Psoas muscle (tissue), 8 donors: ENCODE measurements at regions of chr3 and their contacts with region 1.

Region 1: GRCh38 chr3:108552267-108553159 is 36.7 kb downstream of the CIP2A start:
- DNase-seq: no peak
- ATAC-seq: peak in 1 of 4 donors; percentile 78
- H3K4me3 ChIP-seq: no peak overlapping the region
- H3K27ac ChIP-seq: no peak overlapping the region
- H3K4me1 ChIP-seq: no peaks in the 10 kb centered on the region
- H3K27me3 ChIP-seq: no peaks in the 10 kb centered on the region
- CTCF ChIP-seq: peak; percentile 62

Region 2: GRCh38 chr3:108489771-108490170 is 62.7 kb before region 1 on chr3:
- intact Hi-C with region 1: loop called (anchors 1 to 2 kb)
- DNase-seq: no peak
- ATAC-seq: peak in 3 of 4 donors; percentile 56 to 69 (median 59)
- H3K4me3 ChIP-seq: no peak overlapping the region
- H3K27ac ChIP-seq: no peak overlapping the region
- H3K4me1 ChIP-seq: peaks cover 7% of the 10 kb centered on the region
- H3K27me3 ChIP-seq: no peaks in the 10 kb centered on the region
- CTCF ChIP-seq: peak; percentile 78

Region 3: GRCh38 chr3:108569336-108569735 is 16.8 kb after region 1 on chr3:
- intact Hi-C with region 1: loop called in 1 of 2 experiments (anchors 1 kb)
- DNase-seq: no peak
- ATAC-seq: no peak
- H3K4me3 ChIP-seq: no peak overlapping the region
- H3K27ac ChIP-seq: no peak overlapping the region
- H3K4me1 ChIP-seq: no peaks in the 10 kb centered on the region
- H3K27me3 ChIP-seq: no peaks in the 10 kb centered on the region
- CTCF ChIP-seq: no peak

Region 4: DNA sequence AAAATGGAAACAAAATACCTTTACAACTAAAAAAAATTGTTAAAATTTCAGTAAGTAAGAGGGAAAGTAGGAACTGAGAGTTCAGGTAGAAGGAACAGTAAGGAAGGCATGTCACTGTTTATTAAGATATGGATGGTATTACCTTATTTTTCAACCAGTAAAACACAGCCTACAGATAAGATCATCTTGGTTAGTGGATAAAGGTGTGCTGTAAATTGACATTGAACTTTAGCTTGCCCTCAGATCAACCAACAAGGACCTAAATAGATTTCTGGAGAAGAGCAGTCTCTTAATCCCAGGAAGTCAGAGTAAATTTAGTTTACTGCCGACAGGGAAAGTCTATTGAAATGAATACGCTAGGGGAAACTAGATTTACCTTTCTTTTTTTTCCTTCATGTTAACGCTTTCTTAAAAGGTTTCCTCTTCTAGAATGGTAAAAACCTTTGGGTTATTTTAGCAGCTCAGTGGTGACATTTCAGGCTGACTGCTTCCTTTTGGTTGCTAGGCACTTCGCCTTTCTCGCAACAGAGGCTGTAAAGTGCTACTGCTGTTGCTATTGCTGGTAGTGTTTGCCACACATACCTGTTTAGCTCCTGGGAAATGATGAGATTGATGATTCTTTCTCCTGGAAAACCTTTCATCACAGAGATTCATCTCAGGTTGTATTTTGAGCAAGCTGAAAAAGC is 49.9 kb after region 1 on chr3:
- intact Hi-C with region 1: no loop called
- DNase-seq: no peak
- ATAC-seq: peak in 3 of 4 donors; percentile 40 to 82 (median 71)
- H3K4me3 ChIP-seq: no peak overlapping the region
- H3K27ac ChIP-seq: no peak overlapping the region
- H3K4me1 ChIP-seq: peaks cover 18% of the 10 kb centered on the region
- H3K27me3 ChIP-seq: no peaks in the 10 kb centered on the region
- CTCF ChIP-seq: no peak

Region 5: DNA sequence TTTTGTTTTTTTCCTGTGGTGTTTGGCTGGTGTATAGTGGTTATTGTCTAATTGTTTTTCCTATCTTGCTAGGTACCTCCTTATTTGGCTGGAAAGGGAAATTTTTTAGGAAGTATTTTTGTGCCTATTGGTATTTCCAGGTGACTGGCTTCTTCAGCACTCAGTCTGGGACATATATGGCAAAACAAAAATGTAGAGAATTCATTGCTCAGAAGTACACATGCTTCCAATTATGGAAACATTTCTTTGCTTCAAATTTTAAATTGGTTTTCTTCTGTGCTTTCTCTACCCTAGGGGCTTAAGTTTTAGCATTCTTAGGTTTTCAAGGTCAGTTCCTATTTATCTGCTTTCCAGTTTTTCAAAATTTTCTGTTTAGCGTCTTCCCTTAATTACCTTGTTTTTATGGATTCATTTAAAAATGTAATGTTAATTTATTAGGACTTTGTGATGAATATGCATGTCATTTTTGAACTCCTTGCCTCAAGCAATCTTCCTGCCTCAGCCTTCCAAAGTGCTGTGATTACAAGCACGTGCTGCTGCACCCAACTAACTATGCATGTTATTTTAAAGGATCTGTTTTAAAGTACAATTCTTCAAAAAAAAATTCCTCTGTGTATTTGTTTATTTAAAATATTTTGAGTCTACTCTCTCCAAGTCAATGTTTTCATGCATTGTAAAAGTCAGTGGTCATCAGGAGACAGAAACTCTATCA is 1016.8 kb after region 1 on chr3:
- intact Hi-C with region 1: no loop called
- DNase-seq: no peak
- ATAC-seq: no peak
- H3K4me3 ChIP-seq: no peak overlapping the region
- H3K27ac ChIP-seq: no peak overlapping the region
- H3K4me1 ChIP-seq: no peaks in the 10 kb centered on the region
- H3K27me3 ChIP-seq: no peaks in the 10 kb centered on the region
- CTCF ChIP-seq: no peak